ENCODE measurements at regions of chr12 and their contacts with region 1.

Region 1: DNA sequence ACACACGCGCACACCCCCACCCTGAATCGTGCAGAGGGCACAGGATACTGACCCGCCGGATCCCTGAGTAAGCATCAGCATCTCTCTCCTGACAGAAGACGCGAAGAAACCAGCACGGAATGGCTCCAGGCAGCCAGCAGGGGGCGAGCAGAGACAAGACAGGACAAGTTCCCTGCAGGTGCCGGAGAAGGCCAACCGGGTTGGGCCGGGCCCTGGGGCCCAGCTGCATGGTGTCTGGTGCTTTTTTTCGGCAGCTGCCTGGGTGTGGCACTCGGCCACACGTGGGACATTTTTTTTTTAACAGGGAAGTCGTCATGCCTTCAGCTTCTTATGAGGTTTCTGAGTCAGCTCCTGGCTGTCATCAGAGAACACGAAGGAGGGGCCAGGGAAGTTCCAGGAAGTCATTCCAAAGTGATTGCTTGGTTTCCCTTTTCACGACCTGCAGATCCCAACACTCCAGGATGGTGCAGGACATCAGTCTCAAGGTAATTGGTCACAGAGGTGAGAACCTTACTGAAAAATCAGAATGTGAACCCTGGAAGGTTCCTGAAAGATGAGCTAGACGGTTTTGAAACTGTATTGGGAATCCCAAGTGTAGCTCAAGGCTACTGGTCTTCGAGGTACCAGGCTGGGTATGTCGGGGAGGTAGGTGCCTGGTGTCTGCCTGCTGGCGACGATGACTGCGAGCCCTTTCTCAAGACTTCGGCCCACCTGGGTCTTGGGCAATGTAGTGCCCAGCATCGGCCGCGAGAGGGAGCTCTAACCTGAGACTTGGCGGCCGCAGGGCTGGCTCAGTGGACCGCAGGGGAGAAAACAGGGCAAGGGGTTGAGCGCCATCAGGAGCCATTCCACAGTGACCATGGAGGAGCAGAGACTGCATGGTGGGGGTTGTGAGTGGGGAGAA is 190.8 kb upstream of the PRMT8 start:
- DNase-seq: peak; percentile 93

Region 2: DNA sequence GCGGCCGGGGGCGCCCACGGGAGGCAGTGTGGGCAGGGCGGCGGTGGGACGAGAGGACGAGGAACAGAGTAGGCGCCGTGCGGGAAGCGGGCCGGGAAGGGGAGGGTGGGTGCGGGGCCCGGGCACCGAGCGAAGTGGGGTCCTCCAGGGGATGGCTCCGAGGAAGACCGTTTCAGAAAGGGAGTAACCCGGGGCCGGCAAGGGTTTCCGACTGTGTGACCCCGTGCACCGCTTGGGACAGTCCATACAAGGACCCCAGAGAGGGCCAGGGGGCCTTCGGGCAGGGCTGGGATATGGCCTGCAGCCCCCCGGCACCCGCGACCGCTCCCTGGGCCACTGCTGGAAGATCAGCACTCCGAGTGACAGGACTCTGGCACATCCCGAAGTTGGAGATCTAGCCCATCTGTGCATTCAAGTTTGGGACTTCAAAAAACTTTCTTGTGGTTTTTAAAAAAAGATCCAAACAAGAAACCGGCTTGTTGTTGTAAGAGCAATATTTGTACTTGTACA is 222.6 kb before region 1 on chr12:
- intact Hi-C with region 1: no loop called
- DNase-seq: no peak

Region 3: DNA sequence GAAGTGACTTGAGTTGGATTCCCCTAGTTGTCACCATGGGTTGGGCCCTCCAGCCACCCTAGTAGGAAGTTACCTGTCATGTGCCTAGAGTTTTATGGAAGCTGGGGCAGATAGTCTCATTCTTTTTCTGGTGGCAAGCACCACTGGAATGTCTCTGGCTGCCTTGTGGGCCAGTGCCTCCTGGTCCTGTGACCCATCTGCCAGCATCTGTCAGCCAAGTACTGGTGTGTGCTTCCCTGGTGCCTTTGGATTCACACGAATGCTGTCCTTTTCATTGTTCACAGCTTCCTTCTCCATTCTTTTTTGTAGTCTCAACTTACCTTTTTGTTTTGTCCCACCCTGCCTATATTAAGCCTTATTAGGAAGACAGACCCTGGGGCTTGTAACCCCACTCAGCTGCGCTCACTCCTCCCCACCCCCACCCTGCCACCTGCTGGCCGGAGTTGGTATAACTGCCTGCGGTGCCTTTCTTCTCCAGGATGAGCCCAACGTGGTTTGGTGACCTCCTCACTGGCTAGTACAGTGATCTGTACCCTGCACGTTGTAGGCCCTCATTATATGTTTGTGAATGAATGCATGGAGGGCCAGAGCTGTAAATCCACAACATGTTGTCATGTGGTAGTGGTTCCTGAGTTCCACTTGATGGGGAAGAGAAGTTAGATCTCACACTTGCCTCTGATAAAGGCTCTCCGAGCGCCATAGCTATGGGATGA is 97.3 kb before region 1 on chr12:
- intact Hi-C with region 1: no loop called
- DNase-seq: no peak

Region 4: GRCh38 chr12:3389986-3390385 is 89.8 kb after region 1 on chr12:
- intact Hi-C with region 1: no loop called
- DNase-seq: no peak

Region 5: GRCh38 chr12:3670083-3670620 is 370.0 kb after region 1 on chr12:
- intact Hi-C with region 1: loop called (anchors 10 kb)
- DNase-seq: no peak

Region 6: GRCh38 chr12:3803865-3804472 is 503.8 kb after region 1 on chr12:
- intact Hi-C with region 1: loop called (anchors 5 kb)
- DNase-seq: peak; percentile 82

Measured in cardiac septum (tissue), 1 donor.